Naive thymus-derived CD8-positive, alpha-beta T cell (primary cell): ENCODE measurements at regions of chr16 and their contacts with region 1.

Region 1: DNA sequence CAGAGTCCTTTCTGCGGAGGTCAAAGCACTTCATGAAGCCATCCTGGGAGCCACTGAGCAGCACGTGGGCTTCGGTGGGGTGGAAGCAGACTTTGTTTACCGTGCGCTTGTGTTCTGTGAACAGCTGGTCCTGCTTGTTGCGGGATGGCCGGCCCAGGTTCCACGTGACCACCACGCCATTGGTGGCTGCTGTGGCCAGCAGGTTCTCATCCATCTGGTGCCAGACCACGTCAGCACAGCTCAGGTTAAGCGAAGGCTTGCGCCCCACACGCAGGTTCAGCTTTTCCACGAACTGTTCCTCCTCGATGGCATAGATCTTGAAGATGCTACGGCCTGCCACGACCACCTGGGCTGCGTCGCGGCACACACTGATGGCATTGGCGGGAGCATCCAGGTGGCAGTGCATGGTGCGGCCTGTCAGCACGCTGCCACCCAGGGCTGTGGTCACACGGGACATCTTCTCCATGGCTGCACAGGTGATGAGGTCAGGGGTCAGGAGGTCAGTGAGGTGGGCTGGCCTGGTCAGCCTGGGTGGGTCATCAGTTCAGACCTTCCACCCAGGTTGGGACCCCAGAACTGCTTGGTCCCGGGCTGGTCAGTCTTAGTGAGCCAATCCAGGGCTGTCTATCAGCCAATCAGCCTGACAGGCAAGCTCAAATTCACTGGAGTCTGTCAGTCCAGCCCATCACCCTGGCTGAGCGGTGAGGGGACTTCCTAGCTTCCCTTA is 860 bp downstream of the WDR24 start:
- DNase-seq: no peak
- ATAC-seq: no peak
- H3K4me3 Mint-ChIP-seq: peak overlapping the region; percentile 82 to 95 (median 91)
- H3K27ac Mint-ChIP-seq: peak overlapping the region; percentile 71 to 95 (median 88)
- H3K4me1 Mint-ChIP-seq: peaks cover 5 to 45% (median 28%) of the 10 kb centered on the region in 4 donors
- H3K27me3 Mint-ChIP-seq: peaks cover 0 to 2% (median 0%) of the 10 kb centered on the region in 5 donors

Region 2: DNA sequence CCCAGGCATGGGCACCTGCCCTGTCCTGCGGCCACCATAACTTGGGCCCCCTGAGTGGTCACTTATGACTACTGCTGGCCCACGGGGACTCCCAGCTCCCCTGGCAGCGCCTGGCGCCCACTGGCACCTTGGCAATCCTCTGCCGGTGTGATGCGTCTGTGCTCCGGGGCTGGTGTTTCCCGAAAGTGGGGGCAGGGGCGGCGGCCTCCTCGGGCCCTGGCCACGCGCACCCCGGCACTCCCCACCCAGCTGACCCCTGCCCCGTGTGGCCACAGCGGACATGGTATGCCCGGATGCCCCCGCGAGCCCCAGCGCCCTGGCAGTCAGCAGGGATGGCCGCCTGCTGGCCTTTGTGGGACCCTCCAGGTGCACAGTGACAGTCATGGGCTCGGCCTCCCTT is 31.9 kb before region 1 on chr16:
- POLR2A ChIA-PET with region 1: no interaction called
- DNase-seq: no peak
- ATAC-seq: no peak
- H3K4me3 Mint-ChIP-seq: no peak overlapping the region
- H3K27ac Mint-ChIP-seq: no peak overlapping the region
- H3K4me1 Mint-ChIP-seq: peaks cover 2 to 7% (median 5%) of the 10 kb centered on the region in 4 donors
- H3K27me3 Mint-ChIP-seq: no peaks in the 10 kb centered on the region

Region 3: DNA sequence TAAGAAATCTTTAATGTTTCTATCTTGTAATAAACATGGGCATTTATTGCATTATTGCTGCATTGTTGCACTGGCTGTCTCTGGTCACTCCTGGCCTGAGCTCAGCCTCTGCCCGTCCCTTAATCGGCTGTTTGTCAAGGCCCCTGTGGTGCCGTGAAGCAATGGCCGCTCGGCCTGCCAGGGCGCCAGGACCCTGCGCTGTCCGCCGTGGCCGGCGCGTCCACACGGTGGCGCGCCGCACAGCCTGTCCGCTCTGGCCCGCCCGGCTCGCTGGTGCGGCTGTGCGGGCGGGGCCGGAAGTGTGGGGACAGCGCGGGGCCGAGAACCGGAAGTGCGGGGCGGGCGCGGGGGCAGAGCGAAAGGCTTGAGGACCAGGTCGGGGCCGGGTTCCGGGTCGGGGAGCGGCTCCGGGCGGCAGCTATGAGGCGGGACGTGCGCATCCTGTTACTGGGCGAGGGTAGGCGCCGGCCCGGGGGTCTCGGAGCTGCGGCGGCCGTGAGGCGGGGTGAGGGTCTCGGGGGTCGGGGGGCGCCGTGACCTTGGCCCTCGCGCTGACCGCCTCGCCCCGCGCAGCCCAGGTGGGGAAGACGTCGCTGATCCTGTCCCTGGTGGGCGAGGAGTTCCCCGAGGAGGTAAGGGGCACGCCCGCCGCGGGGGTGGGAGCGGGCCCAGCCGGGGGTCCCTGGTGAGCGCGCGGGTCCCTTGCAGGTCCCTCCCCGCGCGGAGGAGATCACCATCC is 21.4 kb before region 1 on chr16 and contains the start of gene RHOT2:
- POLR2A ChIA-PET with region 1: interaction called, 95 read pairs
- DNase-seq: peak; percentile 79 to 92 (median 86)
- ATAC-seq: peak; percentile 88 to 94
- H3K4me3 Mint-ChIP-seq: peak within 1 kb of the TSS; percentile 65 to 87 (median 80)
- H3K27ac Mint-ChIP-seq: peak within 1 kb of the TSS in 9 of 10 donors; percentile 79 to 96 (median 87)
- H3K4me1 Mint-ChIP-seq: peaks cover 0 to 17% (median 11%) of the 10 kb centered on the region in 4 donors
- H3K27me3 Mint-ChIP-seq: no peaks in the 10 kb centered on the region
- polyA plus RNA-seq, gene RHOT2: 25.1 to 44.8 (median 31.8) TPM

Region 4: GRCh38 chr16:674968-675883 is 14.1 kb before region 1 on chr16 and contains the start of gene RHBDL1:
- POLR2A ChIA-PET with region 1: interaction called, 95 read pairs
- DNase-seq: no peak
- ATAC-seq: no peak
- H3K4me3 Mint-ChIP-seq: peak within 1 kb of the TSS in 8 of 10 donors; percentile 42 to 66 (median 49)
- H3K27ac Mint-ChIP-seq: no peak within 1 kb of the TSS
- H3K4me1 Mint-ChIP-seq: peaks cover 4 to 22% (median 10%) of the 10 kb centered on the region in 4 donors
- H3K27me3 Mint-ChIP-seq: peaks cover 0 to 2% (median 0%) of the 10 kb centered on the region in 5 donors
- polyA plus RNA-seq, gene RHBDL1: not detected

Region 5: DNA sequence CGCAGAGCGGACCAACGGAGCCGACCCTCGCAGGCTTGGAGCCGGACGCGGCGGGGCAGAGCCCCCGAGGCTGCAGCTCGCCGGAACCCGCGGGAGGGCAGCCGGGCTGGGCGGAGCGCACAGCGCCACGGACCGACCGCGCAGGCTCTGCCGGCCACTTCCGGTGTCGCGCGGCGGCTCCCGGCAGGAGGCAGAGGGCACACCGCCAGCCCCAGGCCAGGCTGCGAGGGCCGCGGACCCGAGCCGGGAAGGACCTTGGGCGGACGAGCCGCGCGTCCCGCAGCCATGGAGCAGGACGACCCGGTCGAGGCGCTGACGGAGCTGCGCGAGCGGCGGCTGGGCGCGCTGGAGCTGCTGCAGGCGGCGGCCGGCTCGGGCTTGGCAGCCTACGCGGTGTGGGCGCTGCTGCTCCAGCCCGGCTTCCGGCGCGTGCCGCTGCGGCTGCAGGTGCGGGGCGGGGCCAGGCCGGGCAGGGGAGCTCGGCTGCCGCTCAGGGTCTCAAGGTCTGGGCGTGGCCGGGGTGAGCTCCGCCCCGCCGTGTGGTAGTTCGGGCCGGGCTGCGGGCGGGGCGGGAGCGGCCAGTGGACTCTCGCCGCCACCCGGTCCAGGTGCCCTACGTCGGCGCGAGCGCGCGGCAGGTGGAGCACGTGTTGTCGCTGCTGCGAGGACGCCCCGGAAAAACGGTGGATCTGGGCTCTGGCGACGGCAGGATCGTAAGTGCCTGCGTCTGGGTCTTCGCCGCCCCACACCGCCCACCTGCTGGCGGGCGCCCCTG is 31.8 kb after region 1 on chr16 and contains the start of gene ANTKMT:
- POLR2A ChIA-PET with region 1: interaction called, 56 read pairs
- DNase-seq: peak; percentile 66 to 83 (median 78)
- ATAC-seq: peak; percentile 71
- H3K4me3 Mint-ChIP-seq: peak within 1 kb of the TSS; percentile 79 to 95 (median 87)
- H3K27ac Mint-ChIP-seq: peak within 1 kb of the TSS; percentile 69 to 96 (median 91)
- H3K4me1 Mint-ChIP-seq: peaks cover 25 to 51% (median 38%) of the 10 kb centered on the region in 4 donors
- H3K27me3 Mint-ChIP-seq: no peaks in the 10 kb centered on the region
- polyA plus RNA-seq, gene ANTKMT: 93.5 to 128 (median 113) TPM

Region 6: GRCh38 chr16:760545-761343 is 71.4 kb after region 1 on chr16 and contains the start of gene MSLN:
- POLR2A ChIA-PET with region 1: no interaction called
- DNase-seq: no peak
- ATAC-seq: no peak
- H3K4me3 Mint-ChIP-seq: no peak within 1 kb of the TSS
- H3K27ac Mint-ChIP-seq: no peak within 1 kb of the TSS
- H3K4me1 Mint-ChIP-seq: peaks cover 0 to 8% (median 1%) of the 10 kb centered on the region in 4 donors
- H3K27me3 Mint-ChIP-seq: peaks cover 0 to 8% (median 2%) of the 10 kb centered on the region in 5 donors
- polyA plus RNA-seq, gene MSLN: not detected